ENCODE measurements at regions of chr4 and their contacts with region 1.

Region 1: GRCh38 chr4:88514557-88515511 is 8.7 kb downstream of the PYURF start:
- DNase-seq: no peak
- H3K4me3 ChIP-seq: no peak overlapping the region
- H3K27ac ChIP-seq: no peak overlapping the region
- H3K4me1 ChIP-seq: peaks cover 0 to 4% of the 10 kb centered on the region in 2 donors
- H3K27me3 ChIP-seq: no peaks in the 10 kb centered on the region
- CTCF ChIP-seq: no peak

Region 2: GRCh38 chr4:87856816-87857215 is 658.0 kb before region 1 on chr4:
- intact Hi-C with region 1: loop called (anchors 5 kb)
- DNase-seq: no peak
- H3K4me3 ChIP-seq: no peak overlapping the region
- H3K27ac ChIP-seq: no peak overlapping the region
- H3K4me1 ChIP-seq: no peaks in the 10 kb centered on the region
- H3K27me3 ChIP-seq: no peaks in the 10 kb centered on the region
- CTCF ChIP-seq: no peak

Region 3: DNA sequence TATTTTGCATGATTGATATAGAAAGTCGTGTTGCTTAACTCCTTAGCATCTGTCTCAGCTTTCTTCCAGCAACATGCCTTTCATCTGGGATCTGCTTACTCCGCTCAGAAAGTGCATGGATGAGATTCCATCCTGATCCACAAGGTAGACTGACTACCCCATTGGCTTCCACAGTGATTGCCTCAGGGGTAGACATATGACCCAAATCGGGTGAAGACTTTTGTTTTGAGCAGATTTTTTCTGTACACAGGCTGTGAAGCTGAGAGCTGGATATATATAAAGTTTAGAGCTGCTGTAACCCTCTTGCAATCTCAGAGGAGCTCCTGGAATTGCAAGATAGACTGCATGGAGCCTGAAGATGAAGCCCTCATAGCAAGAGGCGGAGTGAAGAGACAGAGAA is 144.9 kb before region 1 on chr4:
- intact Hi-C with region 1: loop called (anchors 2 kb)
- DNase-seq: no peak
- H3K4me3 ChIP-seq: no peak overlapping the region
- H3K27ac ChIP-seq: no peak overlapping the region
- H3K4me1 ChIP-seq: no peaks in the 10 kb centered on the region
- H3K27me3 ChIP-seq: no peaks in the 10 kb centered on the region
- CTCF ChIP-seq: no peak

Region 4: GRCh38 chr4:88378691-88379559 is 135.9 kb before region 1 on chr4 and contains the start of gene HERC6:
- intact Hi-C with region 1: loop called (anchors 2 kb)
- DNase-seq: peak; percentile 23 to 84
- H3K4me3 ChIP-seq: peak within 1 kb of the TSS; percentile 69 to 81
- H3K27ac ChIP-seq: peak within 1 kb of the TSS; percentile 66 to 77
- H3K4me1 ChIP-seq: no peaks in the 10 kb centered on the region
- H3K27me3 ChIP-seq: no peaks in the 10 kb centered on the region
- CTCF ChIP-seq: peak; percentile 81 to 84 (median 81)
- total RNA-seq, gene HERC6: 32.7 TPM

Region 5: GRCh38 chr4:88737307-88737941 is 222.6 kb after region 1 on chr4:
- intact Hi-C with region 1: no loop called
- DNase-seq: no peak
- H3K4me3 ChIP-seq: peak overlapping the region in 1 of 2 donors; percentile 31
- H3K27ac ChIP-seq: peak overlapping the region; percentile 42 to 63
- H3K4me1 ChIP-seq: peaks cover 8 to 33% of the 10 kb centered on the region in 2 donors
- H3K27me3 ChIP-seq: no peaks in the 10 kb centered on the region
- CTCF ChIP-seq: no peak